ENCODE measurements at regions of chr7 and their contacts with region 1.

Region 1: GRCh38 chr7:909358-910329 is 33.3 kb downstream of the GET4 start:
- DNase-seq: peak in 1 of 5 donors; percentile 40
- H3K4me3 ChIP-seq: no peak overlapping the region
- H3K4me3 Mint-ChIP-seq: peak overlapping the region in 6 of 7 donors; percentile 19 to 84 (median 59)
- H3K27ac ChIP-seq: no peak overlapping the region
- H3K27ac Mint-ChIP-seq: peak overlapping the region in 5 of 8 donors; percentile 11 to 82 (median 79)
- H3K4me1 ChIP-seq: peaks cover 13% of the 10 kb centered on the region
- H3K4me1 Mint-ChIP-seq: peaks cover 4 to 12% (median 11%) of the 10 kb centered on the region in 3 donors
- H3K27me3 ChIP-seq: no peaks in the 10 kb centered on the region
- H3K27me3 Mint-ChIP-seq: no peaks in the 10 kb centered on the region

Region 2: GRCh38 chr7:886626-887487 is 22.8 kb before region 1 on chr7:
- CTCF ChIA-PET with region 1: no interaction called
- POLR2A ChIA-PET with region 1: no interaction called
- DNase-seq: no peak
- H3K4me3 ChIP-seq: no peak overlapping the region
- H3K4me3 Mint-ChIP-seq: no peak overlapping the region
- H3K27ac ChIP-seq: no peak overlapping the region
- H3K27ac Mint-ChIP-seq: no peak overlapping the region
- H3K4me1 ChIP-seq: no peaks in the 10 kb centered on the region
- H3K4me1 Mint-ChIP-seq: peaks cover 14 to 44% (median 16%) of the 10 kb centered on the region in 3 donors
- H3K27me3 ChIP-seq: no peaks in the 10 kb centered on the region
- H3K27me3 Mint-ChIP-seq: peaks cover 0 to 2% of the 10 kb centered on the region in 2 donors

Region 3: DNA sequence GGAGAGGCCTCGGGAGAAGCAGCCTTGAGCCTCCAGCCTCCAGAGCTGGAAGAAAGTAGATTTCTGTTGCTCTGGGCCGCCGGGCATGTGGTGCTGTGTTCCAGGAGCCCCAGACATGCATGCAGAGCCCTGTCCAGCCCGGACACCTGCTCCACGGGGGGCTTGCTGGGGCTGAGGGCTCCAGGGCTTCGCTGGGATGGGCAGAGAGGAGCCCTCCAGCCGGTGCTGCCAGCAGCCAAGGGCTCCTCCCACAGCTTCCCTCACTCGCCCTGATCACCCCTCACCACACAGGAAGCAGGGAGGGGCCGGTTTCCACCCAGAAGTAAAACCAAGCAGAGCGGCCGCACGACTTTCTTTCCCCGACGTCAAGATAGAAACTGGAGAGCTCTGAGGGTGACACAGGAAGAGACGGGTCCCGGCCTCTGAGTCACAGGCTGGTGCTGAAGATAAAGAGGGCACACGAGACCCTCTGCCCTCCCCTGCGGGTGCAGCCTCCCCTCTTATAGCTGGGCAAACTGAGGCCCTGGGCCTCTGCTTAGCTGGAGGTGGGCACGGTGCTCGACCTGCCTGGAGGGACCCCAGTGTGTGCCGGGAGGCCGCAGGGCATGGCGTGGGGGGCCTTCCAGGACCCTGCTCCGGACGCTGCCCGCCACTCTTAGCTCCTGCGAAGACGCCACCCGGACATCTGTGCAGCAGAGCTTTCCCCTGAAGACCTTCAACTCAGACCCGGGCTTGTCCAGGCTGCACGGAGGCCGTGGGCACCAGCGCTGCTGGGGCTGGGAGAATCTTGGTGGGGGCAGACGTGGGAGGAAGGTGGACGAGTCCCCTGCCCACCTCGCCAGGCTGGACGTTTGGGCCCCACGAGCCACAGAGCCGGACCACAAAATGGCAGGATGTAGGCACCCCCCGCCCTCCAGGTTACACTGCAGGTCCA is 13.7 kb after region 1 on chr7:
- CTCF ChIA-PET with region 1: interaction called, 13 read pairs
- POLR2A ChIA-PET with region 1: interaction called, 7 read pairs
- DNase-seq: peak; percentile 88 to 95 (median 90)
- H3K4me3 ChIP-seq: peak overlapping the region; percentile 81
- H3K4me3 Mint-ChIP-seq: peak overlapping the region; percentile 76 to 94 (median 90)
- H3K27ac ChIP-seq: peak overlapping the region; percentile 79
- H3K27ac Mint-ChIP-seq: peak overlapping the region; percentile 82 to 100 (median 98)
- H3K4me1 ChIP-seq: peaks cover 38% of the 10 kb centered on the region
- H3K4me1 Mint-ChIP-seq: peaks cover 22 to 60% (median 36%) of the 10 kb centered on the region in 3 donors
- H3K27me3 ChIP-seq: no peaks in the 10 kb centered on the region
- H3K27me3 Mint-ChIP-seq: no peaks in the 10 kb centered on the region

Region 4: DNA sequence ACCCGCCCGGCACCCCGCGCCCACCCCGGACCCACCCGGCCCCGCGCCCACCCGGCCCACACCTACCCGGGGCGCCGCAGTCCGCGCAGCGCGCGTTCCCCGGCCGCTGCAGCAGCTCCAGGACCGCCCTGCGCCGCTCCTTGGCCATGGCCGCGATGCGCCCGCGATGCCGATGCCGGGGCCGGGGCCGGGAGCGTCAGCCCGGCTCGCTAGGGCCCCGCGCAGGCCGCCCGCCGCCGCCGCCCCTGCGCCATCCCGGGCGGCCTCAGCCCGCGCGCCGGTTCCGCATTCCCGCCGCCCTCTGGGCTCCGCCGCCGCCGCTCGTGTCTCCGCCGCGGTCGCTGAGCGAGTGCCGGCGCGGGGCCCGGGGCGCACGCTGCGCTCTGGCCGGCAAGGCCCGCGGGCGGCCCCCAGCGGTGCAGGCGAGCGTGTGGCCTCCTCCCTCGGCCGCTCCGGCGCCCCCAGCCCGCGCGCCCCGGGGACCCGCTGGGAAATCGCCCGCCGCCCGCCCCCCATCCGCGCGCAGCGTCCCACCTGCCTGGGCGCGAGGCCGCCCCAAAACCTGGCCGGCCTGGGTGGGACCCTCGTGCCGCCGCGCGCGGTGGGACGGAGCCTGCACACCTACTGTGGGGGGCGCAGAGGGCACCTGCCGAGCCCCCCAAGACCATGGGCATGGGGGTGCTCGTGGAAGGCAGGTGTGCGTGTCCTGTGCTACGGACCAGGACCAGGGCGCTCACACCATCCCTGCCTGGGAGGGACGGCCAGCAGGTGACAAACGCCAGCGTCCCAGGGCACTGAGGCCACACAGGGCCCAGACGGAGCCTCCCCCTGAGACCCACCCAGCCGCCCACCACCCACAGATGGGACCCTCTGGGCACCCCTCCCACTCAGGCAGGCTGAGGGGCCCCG is 44.9 kb after region 1 on chr7 and contains the start of gene ADAP1:
- CTCF ChIA-PET with region 1: interaction called, 22 read pairs
- POLR2A ChIA-PET with region 1: no interaction called
- DNase-seq: peak; percentile 38 to 69 (median 62)
- H3K4me3 ChIP-seq: no peak within 1 kb of the TSS
- H3K4me3 Mint-ChIP-seq: peak within 1 kb of the TSS; percentile 66 to 89 (median 80)
- H3K27ac ChIP-seq: no peak within 1 kb of the TSS
- H3K27ac Mint-ChIP-seq: peak within 1 kb of the TSS in 2 of 8 donors; percentile 61 to 63
- H3K4me1 ChIP-seq: peaks cover 8% of the 10 kb centered on the region
- H3K4me1 Mint-ChIP-seq: peaks cover 5 to 20% (median 12%) of the 10 kb centered on the region in 3 donors
- H3K27me3 ChIP-seq: no peaks in the 10 kb centered on the region
- H3K27me3 Mint-ChIP-seq: peaks cover 0 to 2% of the 10 kb centered on the region in 2 donors
- total RNA-seq, gene ADAP1: 67.7 to 77.3 TPM